Panc1 (cell line): ENCODE measurements at regions of chr14 and their contacts with region 1.

Region 1: DNA sequence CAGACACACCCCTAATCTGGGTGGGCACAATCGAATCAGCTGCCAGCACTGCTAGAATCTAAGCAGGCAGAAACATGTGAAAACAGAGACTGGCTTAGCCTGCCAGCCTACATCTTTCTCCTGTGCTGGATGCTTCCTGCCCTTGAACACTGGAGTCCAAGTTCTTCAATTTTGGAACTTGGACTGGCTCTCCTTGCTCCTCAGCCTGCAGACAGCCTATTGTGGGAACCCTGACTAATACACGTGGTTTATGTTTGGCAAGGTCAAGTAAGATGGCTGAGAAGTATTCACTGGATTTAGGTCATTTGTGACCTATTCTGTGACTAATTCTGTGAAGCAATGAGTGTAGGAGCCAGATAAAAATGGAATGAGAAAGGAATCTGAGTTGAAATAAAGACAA is 11.0 kb downstream of the GPR135 start:
- DNase-seq: no peak
- ATAC-seq: no peak
- H3K4me3 ChIP-seq: no peak overlapping the region
- H3K27ac ChIP-seq: no peak overlapping the region
- H3K4me1 ChIP-seq: no peaks in the 10 kb centered on the region
- H3K27me3 ChIP-seq: no peaks in the 10 kb centered on the region
- CTCF ChIP-seq: no peak

Region 2: DNA sequence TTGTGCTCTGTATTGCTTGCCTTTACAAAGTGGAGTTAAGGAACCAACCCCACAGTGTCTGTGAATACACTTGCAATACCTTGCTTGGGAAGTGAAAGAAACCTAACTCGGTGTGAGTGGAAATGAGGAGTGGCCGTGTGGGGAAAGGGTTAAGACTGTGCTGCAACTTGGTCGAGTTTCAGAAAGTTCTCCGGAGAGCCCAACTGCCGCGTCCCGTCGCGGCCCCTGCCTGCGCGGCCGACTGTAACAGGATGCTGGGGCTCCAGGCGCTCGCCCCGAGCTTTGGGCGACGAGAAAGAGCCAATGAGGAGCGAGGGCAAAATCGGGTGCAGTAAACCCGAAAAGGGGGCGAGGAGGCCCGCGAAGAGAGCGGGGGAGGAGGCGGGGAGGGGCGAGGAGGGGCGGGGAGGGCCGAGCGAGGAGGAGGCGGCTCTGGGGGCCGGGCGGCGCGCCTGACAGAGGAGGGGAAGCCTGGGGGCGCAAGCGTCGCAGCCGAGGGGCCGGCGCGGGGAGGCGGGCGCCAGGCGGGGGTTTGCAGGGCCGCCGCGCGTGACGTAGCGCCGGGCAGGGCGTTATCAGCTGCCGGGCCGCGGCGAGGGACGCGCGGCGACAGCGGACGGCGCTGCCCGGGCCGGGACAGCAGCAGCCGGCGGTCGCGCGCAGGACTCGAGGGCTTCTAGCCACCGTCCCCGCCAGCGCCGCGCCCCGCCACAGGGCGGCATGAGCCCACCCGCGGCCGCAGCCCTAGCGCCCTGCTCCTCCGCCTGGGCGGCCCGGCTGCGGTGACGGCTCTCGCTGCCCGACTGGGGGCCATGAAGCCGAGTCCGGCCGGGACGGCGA is 816.5 kb before region 1 on chr14 and contains the start of gene DACT1:
- CTCF ChIA-PET with region 1: no interaction called
- POLR2A ChIA-PET with region 1: no interaction called
- in situ Hi-C with region 1: no loop called
- intact Hi-C with region 1: loop called (anchors 10 kb)
- DNase-seq: no peak
- ATAC-seq: peak; percentile 78
- H3K4me3 ChIP-seq: peak within 1 kb of the TSS; percentile 49 to 67
- H3K27ac ChIP-seq: no peak within 1 kb of the TSS
- H3K4me1 ChIP-seq: no peaks in the 10 kb centered on the region
- H3K27me3 ChIP-seq: peaks cover 20% of the 10 kb centered on the region
- CTCF ChIP-seq: no peak
- total RNA-seq, gene DACT1: 0.15 TPM

Region 3: DNA sequence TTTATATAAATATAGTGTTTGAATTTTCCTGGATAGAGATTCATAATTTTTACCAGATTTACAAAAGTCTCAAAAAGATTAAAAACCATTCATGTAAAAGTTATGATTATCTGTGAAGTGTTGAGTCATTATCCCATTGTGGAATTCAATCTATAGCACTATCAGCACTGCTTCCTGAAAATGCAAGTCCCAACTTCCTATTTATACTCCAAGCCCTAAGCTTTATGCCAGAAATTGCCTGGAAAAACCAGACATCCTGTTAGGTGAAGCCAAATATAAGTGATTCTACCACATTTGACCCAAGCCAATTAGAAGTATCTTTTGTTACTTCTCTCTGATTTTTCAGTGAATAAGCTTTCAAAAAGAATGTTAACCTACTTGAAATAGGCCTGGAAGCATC is 118.0 kb before region 1 on chr14:
- CTCF ChIA-PET with region 1: no interaction called
- POLR2A ChIA-PET with region 1: interaction called, 10 read pairs
- in situ Hi-C with region 1: no loop called
- intact Hi-C with region 1: no loop called
- DNase-seq: no peak
- ATAC-seq: no peak
- H3K4me3 ChIP-seq: no peak overlapping the region
- H3K27ac ChIP-seq: no peak overlapping the region
- H3K4me1 ChIP-seq: no peaks in the 10 kb centered on the region
- H3K27me3 ChIP-seq: no peaks in the 10 kb centered on the region
- CTCF ChIP-seq: no peak

Region 4: GRCh38 chr14:59398841-59399240 is 55.3 kb before region 1 on chr14:
- CTCF ChIA-PET with region 1: no interaction called
- POLR2A ChIA-PET with region 1: no interaction called
- in situ Hi-C with region 1: no loop called
- intact Hi-C with region 1: no loop called
- DNase-seq: no peak
- ATAC-seq: no peak
- H3K4me3 ChIP-seq: no peak overlapping the region
- H3K27ac ChIP-seq: no peak overlapping the region
- H3K4me1 ChIP-seq: no peaks in the 10 kb centered on the region
- H3K27me3 ChIP-seq: no peaks in the 10 kb centered on the region
- CTCF ChIP-seq: no peak

Region 5: GRCh38 chr14:59422069-59422881 is 31.9 kb before region 1 on chr14:
- CTCF ChIA-PET with region 1: no interaction called
- POLR2A ChIA-PET with region 1: no interaction called
- in situ Hi-C with region 1: no loop called
- intact Hi-C with region 1: no loop called
- DNase-seq: no peak
- ATAC-seq: no peak
- H3K4me3 ChIP-seq: no peak overlapping the region
- H3K27ac ChIP-seq: no peak overlapping the region
- H3K4me1 ChIP-seq: no peaks in the 10 kb centered on the region
- H3K27me3 ChIP-seq: no peaks in the 10 kb centered on the region
- CTCF ChIP-seq: peak; percentile 29